Common myeloid progenitor, CD34-positive (primary cell): ENCODE measurements at regions of chr6 and their contacts with region 1.

Region 1: DNA sequence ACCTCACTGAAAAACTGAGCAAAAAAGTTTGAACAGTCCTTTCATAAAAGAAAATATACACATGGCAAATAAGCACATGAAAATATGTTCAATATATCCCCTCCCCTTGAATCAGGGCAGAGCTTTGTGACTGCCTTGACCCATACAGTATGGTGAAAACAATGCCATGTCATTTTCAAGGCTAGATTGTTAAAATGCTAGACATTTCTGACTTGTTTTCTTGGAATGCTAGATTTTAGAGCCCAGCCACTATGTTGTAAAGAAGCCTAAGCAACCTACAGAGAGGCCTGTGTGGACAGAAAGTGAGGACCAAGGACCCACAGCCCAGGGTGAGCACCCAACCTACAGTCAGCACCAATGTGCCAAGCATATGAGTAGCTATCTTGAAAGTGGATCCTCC is 17.1 kb upstream of the ASF1A start:
- DNase-seq: no peak
- H3K4me3 ChIP-seq: no peak overlapping the region
- H3K27ac ChIP-seq: no peak overlapping the region
- H3K4me1 ChIP-seq: peaks cover 0 to 5% (median 3%) of the 10 kb centered on the region in 4 experiments
- H3K27me3 ChIP-seq: no peaks in the 10 kb centered on the region

Region 2: GRCh38 chr6:118864341-118865099 is 12.3 kb before region 1 on chr6:
- CTCF ChIA-PET with region 1: interaction called, 10 read pairs
- POLR2A ChIA-PET with region 1: no interaction called
- DNase-seq: peak in 2 of 3 donors; percentile 36 to 59
- H3K4me3 ChIP-seq: peak overlapping the region in 6 of 7 experiments; percentile 25 to 67 (median 36)
- H3K27ac ChIP-seq: peak overlapping the region; percentile 22 to 78
- H3K4me1 ChIP-seq: peaks cover 4 to 22% (median 11%) of the 10 kb centered on the region in 4 experiments
- H3K27me3 ChIP-seq: no peaks in the 10 kb centered on the region